Right ventricle myocardium superior (tissue), 1 donor: ENCODE measurements at regions of chr2 and their contacts with region 1.

Region 1: GRCh38 chr2:151619337-151619989 is 114.8 kb downstream of the NEB start:
- DNase-seq: no peak
- ATAC-seq: no peak

Region 2: DNA sequence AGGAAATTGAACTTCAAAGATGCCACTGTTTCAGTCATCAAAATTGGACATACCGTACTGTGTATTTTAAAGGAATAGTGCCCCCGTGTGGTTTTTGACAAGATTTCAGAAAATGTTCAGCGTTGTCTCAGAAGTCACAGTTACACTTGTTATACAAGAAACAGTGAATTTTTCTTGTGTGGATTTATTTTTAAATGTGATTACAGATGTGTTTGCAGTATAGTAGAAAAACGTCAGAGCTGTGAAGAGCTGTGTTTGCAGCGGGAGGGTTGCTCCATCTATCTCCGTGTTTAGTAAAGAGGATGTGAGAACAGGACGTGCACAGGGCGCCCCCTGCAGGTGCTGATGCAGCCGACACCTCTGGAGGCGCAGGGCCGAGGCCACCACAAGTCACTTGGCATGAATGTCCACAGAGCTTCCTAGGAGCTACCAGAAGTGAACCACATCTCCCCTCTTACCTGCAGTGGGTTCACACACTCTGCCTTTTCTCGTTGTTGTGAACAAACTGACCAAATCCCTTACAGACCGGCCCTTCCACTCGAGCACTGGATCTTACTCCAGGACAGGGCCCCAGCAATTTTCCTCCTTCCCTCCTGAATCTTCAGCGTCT is 406.3 kb after region 1 on chr2:
- intact Hi-C with region 1: loop called (anchors 10 kb)
- DNase-seq: peak; percentile 91
- ATAC-seq: peak; percentile 97